ENCODE measurements at regions of chr5 and their contacts with region 1.

Region 1: GRCh38 chr5:141001854-141002604 is 35.8 kb downstream of the PCDHAC2 start:
- DNase-seq: peak; percentile 25
- H3K4me3 Mint-ChIP-seq: peak overlapping the region; percentile 70
- H3K27ac Mint-ChIP-seq: peak overlapping the region; percentile 98
- H3K4me1 Mint-ChIP-seq: peaks cover 49% of the 10 kb centered on the region
- H3K27me3 Mint-ChIP-seq: no peaks in the 10 kb centered on the region
- CTCF ChIP-seq: no peak

Region 2: GRCh38 chr5:140690941-140691924 is 310.8 kb before region 1 on chr5 and contains the starts of genes HARS1 and HARS2:
- CTCF ChIA-PET with region 1: no interaction called
- intact Hi-C with region 1: no loop called
- DNase-seq: peak; percentile 93
- H3K4me3 Mint-ChIP-seq: peak within 1 kb of the TSS; percentile 93
- H3K27ac Mint-ChIP-seq: peak within 1 kb of the TSS; percentile 73
- H3K4me1 Mint-ChIP-seq: no peaks in the 10 kb centered on the region
- H3K27me3 Mint-ChIP-seq: no peaks in the 10 kb centered on the region
- CTCF ChIP-seq: no peak
- total RNA-seq, gene HARS1: 75.8 and 79.9 TPM in 2 replicates
- total RNA-seq, gene HARS2: 45.1 TPM in 2 replicates

Region 3: GRCh38 chr5:140710899-140711552 is 291.0 kb before region 1 on chr5:
- CTCF ChIA-PET with region 1: interaction called, 3 read pairs
- intact Hi-C with region 1: loop called (anchors 5 kb)
- DNase-seq: peak; percentile 97
- H3K4me3 Mint-ChIP-seq: peak overlapping the region; percentile 99
- H3K27ac Mint-ChIP-seq: peak overlapping the region; percentile 100
- H3K4me1 Mint-ChIP-seq: peaks cover 32% of the 10 kb centered on the region
- H3K27me3 Mint-ChIP-seq: peaks cover 12% of the 10 kb centered on the region
- CTCF ChIP-seq: no peak

Region 4: DNA sequence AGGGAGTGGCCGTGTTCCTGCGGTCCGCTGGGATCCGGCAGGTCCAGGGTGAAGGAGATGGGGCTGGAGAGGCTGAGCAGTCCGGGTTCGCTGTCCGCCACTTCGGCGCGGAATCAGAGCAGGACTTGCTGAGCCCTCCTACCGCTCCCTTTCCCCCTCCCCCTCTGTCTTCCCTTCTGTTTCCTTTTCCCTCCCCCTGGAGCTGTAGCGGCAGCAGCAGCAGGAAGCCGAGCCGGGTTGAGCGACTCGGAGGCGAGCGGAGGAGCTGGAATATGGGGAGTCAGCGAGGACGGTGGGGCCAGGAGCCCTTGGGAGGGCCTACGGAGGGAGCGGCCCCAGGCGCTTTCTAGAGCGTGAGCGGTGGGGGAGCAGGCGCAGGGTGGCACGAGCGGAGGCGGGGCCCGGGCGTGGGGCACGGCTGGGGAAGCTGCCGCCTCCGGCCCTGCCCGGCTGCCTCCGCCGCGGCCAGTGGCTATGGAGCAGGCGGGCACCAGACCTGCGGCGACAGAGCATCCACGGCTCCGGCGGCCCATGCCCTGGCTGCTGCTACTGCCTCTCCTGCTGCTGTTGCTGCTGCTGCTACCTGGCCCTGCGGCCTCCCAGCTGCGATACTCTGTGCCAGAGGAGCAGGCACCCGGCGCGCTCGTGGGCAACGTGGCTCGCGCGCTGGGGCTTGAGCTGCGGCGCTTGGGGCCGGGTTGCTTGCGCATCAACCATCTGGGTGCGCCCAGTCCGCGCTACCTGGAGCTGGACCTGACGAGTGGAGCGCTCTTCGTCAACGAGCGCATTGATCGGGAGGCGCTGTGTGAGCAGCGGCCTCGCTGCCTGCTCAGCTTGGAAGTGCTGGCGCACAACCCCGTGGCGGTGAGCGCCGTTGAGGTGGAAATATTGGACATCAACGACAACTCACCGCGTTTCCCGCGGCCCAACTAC is 35.5 kb before region 1 on chr5 and contains the start of gene PCDHAC2:
- CTCF ChIA-PET with region 1: interaction called, 10 read pairs
- intact Hi-C with region 1: loop called (anchors 2 kb)
- DNase-seq: peak; percentile 86
- H3K4me3 Mint-ChIP-seq: peak within 1 kb of the TSS; percentile 99
- H3K27ac Mint-ChIP-seq: peak within 1 kb of the TSS; percentile 97
- H3K4me1 Mint-ChIP-seq: peaks cover 50% of the 10 kb centered on the region
- H3K27me3 Mint-ChIP-seq: no peaks in the 10 kb centered on the region
- CTCF ChIP-seq: no peak
- total RNA-seq, gene PCDHAC2: 12.6 and 17.1 TPM in 2 replicates

Region 5: GRCh38 chr5:140977003-140977402 is 25.0 kb before region 1 on chr5:
- CTCF ChIA-PET with region 1: no interaction called
- intact Hi-C with region 1: no loop called
- DNase-seq: no peak
- H3K4me3 Mint-ChIP-seq: no peak overlapping the region
- H3K27ac Mint-ChIP-seq: peak overlapping the region; percentile 88
- H3K4me1 Mint-ChIP-seq: no peaks in the 10 kb centered on the region
- H3K27me3 Mint-ChIP-seq: no peaks in the 10 kb centered on the region
- CTCF ChIP-seq: no peak

Region 6: DNA sequence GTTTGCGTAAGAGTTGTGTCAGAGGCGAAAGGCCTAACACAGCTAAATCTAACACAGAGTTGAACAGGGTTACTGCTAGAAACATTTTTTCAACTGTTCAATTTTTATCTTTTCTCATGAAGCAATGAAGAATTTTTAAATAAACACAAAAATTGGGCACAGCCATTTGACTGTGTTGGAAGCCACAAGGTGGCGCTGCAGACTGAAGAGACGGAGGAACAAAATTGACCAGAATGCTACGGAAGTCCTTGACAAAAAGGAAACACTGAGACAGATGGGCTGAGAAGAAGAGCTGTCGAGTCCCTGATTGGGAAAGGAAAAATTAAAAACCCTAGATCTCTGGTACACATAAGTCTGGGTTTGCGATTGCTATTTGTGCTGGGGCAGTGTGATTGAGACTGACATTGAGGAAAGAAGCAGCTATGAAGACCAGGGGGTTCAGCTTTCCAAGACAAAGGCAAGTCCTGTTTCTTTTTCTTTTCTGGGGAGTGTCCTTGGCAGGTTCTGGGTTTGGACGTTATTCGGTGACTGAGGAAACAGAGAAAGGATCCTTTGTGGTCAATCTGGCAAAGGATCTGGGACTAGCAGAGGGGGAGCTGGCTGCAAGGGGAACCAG is 185.0 kb after region 1 on chr5 and contains the start of gene PCDHB9:
- CTCF ChIA-PET with region 1: no interaction called
- intact Hi-C with region 1: no loop called
- DNase-seq: peak; percentile 66
- H3K4me3 Mint-ChIP-seq: peak within 1 kb of the TSS; percentile 53
- H3K27ac Mint-ChIP-seq: no peak within 1 kb of the TSS
- H3K4me1 Mint-ChIP-seq: no peaks in the 10 kb centered on the region
- H3K27me3 Mint-ChIP-seq: no peaks in the 10 kb centered on the region
- CTCF ChIP-seq: peak; percentile 24
- total RNA-seq, gene PCDHB9: 2.4 and 3.5 TPM in 2 replicates